ENCODE measurements at regions of chr17 and their contacts with region 1.

Region 1: GRCh38 chr17:34961093-34961911 is at the starts of genes CCT6B and ZNF830:
- H3K4me3 Mint-ChIP-seq: peak within 1 kb of the TSS; percentile 94
- H3K27ac Mint-ChIP-seq: peak within 1 kb of the TSS; percentile 97
- H3K4me1 Mint-ChIP-seq: peaks cover 21% of the 10 kb centered on the region
- H3K27me3 Mint-ChIP-seq: peaks cover 5% of the 10 kb centered on the region

Region 2: DNA sequence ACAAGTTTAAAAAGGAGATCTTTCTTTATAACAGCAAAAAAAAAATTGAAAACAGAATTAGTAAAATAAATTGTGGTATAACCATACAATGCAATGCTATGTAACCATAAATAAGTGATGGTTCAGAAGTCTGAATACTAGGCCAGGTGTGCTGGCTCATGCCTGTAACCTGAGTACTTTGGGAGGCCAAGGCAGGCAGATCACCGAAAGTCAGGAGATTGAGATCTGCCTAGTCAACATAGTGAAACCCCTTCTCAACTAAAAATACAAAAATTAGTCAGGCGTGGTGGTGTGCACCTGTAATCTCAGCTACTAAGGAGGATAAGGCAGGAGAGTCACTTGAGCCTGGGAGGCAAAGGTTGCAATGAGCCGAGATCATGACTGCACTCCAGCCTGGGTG is 34.6 kb before region 1 on chr17:
- intact Hi-C with region 1: no loop called
- H3K4me3 Mint-ChIP-seq: no peak overlapping the region
- H3K27ac Mint-ChIP-seq: no peak overlapping the region
- H3K4me1 Mint-ChIP-seq: peaks cover 12% of the 10 kb centered on the region
- H3K27me3 Mint-ChIP-seq: no peaks in the 10 kb centered on the region

Region 3: DNA sequence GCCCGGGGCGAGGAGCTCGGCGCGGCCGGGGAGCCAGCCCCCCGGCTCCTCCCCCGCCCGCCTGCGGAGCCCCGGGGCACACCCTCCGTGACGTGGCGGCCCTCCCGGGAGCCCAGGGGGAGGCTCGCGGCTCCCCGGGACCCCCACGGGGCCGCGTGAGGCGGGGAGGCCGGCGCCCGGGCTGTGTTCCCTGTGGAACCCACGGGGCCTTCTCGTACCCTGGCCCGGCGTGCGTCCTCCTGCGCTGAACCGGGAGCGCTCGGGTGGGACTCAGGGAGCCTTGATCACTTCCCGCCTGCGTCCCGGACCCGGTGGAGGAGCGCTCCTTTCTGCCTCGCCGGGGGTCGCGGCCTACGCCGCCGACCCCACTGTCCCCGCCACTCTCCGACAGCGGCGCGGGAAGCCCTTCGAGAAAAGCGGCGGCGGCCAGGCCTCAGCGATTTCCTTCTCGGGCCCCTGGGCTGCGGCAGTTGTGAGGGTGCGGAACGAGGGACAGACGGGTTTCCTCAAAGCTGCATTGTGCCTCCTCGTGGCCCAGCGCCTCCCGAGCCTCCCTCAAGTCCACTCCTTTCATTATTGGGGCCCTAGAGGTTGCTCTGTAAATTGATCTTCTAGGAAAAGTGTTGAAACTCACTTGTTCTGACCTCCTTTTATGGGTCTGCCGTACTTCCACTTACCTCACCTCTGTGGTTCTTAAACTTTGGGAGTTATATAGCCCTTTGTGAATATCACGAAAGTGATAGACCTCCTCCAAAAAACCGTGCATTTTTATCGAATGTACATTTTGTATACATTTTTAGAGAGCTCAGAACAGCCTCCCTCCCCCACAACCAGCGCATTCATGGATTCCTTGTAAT is 19.6 kb after region 1 on chr17:
- intact Hi-C with region 1: loop called (anchors 1 kb)
- H3K4me3 Mint-ChIP-seq: peak overlapping the region; percentile 93
- H3K27ac Mint-ChIP-seq: peak overlapping the region; percentile 97
- H3K4me1 Mint-ChIP-seq: peaks cover 35% of the 10 kb centered on the region
- H3K27me3 Mint-ChIP-seq: no peaks in the 10 kb centered on the region

Region 4: GRCh38 chr17:35149941-35150340 is 188.6 kb after region 1 on chr17:
- intact Hi-C with region 1: no loop called
- H3K4me3 Mint-ChIP-seq: no peak overlapping the region
- H3K27ac Mint-ChIP-seq: no peak overlapping the region
- H3K4me1 Mint-ChIP-seq: no peaks in the 10 kb centered on the region
- H3K27me3 Mint-ChIP-seq: peaks cover 7% of the 10 kb centered on the region

Region 5: GRCh38 chr17:35161281-35161761 is 200.0 kb after region 1 on chr17:
- intact Hi-C with region 1: no loop called
- H3K4me3 Mint-ChIP-seq: no peak overlapping the region
- H3K27ac Mint-ChIP-seq: no peak overlapping the region
- H3K4me1 Mint-ChIP-seq: peaks cover 6% of the 10 kb centered on the region
- H3K27me3 Mint-ChIP-seq: peaks cover 16% of the 10 kb centered on the region

Region 6: GRCh38 chr17:35390663-35391062 is 429.4 kb after region 1 on chr17:
- intact Hi-C with region 1: no loop called
- H3K4me3 Mint-ChIP-seq: no peak overlapping the region
- H3K27ac Mint-ChIP-seq: no peak overlapping the region
- H3K4me1 Mint-ChIP-seq: peaks cover 50% of the 10 kb centered on the region
- H3K27me3 Mint-ChIP-seq: peaks cover 2% of the 10 kb centered on the region